B cell (primary cell): ENCODE measurements at regions of chrX and their contacts with region 1.

Region 1: GRCh38 chrX:71118032-71118984 is at the start of gene MED12:
- DNase-seq: peak; percentile 83
- ATAC-seq: peak; percentile 97
- H3K4me3 ChIP-seq: peak within 1 kb of the TSS; percentile 70 to 78 (median 74)
- H3K4me3 Mint-ChIP-seq: peak within 1 kb of the TSS; percentile 88
- H3K27ac ChIP-seq: peak within 1 kb of the TSS; percentile 85 to 90
- H3K27ac Mint-ChIP-seq: peak within 1 kb of the TSS; percentile 91
- H3K4me1 ChIP-seq: peaks cover 17 to 27% of the 10 kb centered on the region in 2 donors
- H3K4me1 Mint-ChIP-seq: peaks cover 17% of the 10 kb centered on the region
- H3K27me3 ChIP-seq: no peaks in the 10 kb centered on the region
- H3K27me3 Mint-ChIP-seq: no peaks in the 10 kb centered on the region
- CTCF ChIP-seq: no peak
- total RNA-seq, gene MED12: 118 and 123 TPM in 2 replicates

Region 2: DNA sequence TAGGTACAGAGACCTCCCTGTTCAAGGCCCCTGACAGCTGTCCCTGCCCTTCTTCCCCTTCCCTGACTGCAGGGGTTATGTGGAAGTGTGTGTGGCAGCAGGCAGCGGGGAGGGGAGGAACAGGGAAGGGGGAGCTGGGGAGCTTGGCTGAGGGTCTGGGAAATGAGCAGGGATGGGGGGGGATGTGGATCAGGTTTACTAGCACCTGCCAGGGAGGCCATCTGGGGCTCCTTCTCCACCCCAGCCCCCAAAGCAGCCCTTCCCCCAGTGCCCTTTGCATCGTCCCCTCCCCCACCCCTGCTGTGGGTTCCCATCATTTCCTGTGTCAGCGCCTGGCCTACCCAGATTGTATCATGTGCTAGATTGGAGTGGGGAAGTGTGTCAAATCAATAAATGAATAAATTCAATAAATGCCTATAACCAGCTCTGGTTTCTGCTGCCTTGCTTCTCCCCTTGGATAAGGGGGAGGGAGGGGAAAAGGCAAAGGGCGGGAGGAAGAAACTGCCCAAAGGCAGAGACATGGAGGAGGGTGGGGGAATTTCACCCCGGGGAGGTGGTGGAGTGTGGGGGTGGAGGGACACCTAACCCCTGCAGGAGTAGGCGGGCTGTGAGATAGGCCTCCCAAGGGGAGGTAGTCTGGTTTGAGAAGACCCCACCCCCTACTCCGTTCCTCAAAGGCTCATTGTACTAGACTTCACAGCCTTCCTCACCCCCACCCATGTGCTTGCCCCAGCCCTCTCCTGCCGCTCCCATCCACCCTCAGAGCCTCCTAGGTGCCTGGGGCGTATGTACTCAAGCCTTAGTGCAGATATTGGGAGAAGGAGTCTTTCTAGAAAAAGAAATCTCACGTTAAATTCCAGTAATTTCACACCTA is 15.0 kb before region 1 on chrX:
- CTCF ChIA-PET with region 1: interaction called, 31 read pairs
- POLR2A ChIA-PET with region 1: interaction called, 29 read pairs
- intact Hi-C with region 1: loop called (anchors 2 kb)
- DNase-seq: peak; percentile 60
- ATAC-seq: peak; percentile 67
- H3K4me3 ChIP-seq: peak overlapping the region in 1 of 5 experiments; percentile 41
- H3K4me3 Mint-ChIP-seq: peak overlapping the region; percentile 73
- H3K27ac ChIP-seq: peak overlapping the region; percentile 67 to 83
- H3K27ac Mint-ChIP-seq: peak overlapping the region; percentile 90
- H3K4me1 ChIP-seq: peaks cover 52 to 60% of the 10 kb centered on the region in 2 donors
- H3K4me1 Mint-ChIP-seq: peaks cover 59% of the 10 kb centered on the region
- H3K27me3 ChIP-seq: no peaks in the 10 kb centered on the region
- H3K27me3 Mint-ChIP-seq: no peaks in the 10 kb centered on the region
- CTCF ChIP-seq: no peak